MCF 10A (cell line): ENCODE measurements at regions of chr10 and their contacts with region 1.

Region 1: GRCh38 chr10:116287906-116288501 is 15.0 kb upstream of the GFRA1 start:
- DNase-seq: peak; percentile 56
- H3K4me3 Mint-ChIP-seq: no peak overlapping the region
- H3K27ac Mint-ChIP-seq: no peak overlapping the region
- H3K4me1 Mint-ChIP-seq: no peaks in the 10 kb centered on the region
- H3K27me3 Mint-ChIP-seq: peaks cover 34% of the 10 kb centered on the region
- CTCF ChIP-seq: peak; percentile 64

Region 2: GRCh38 chr10:115355162-115355760 is 932.7 kb before region 1 on chr10:
- CTCF ChIA-PET with region 1: interaction called, 4 read pairs
- POLR2A ChIA-PET with region 1: no interaction called
- intact Hi-C with region 1: loop called (anchors 1 kb)
- DNase-seq: peak; percentile 77
- H3K4me3 Mint-ChIP-seq: no peak overlapping the region
- H3K27ac Mint-ChIP-seq: no peak overlapping the region
- H3K4me1 Mint-ChIP-seq: no peaks in the 10 kb centered on the region
- H3K27me3 Mint-ChIP-seq: peaks cover 90% of the 10 kb centered on the region
- CTCF ChIP-seq: peak; percentile 90

Region 3: GRCh38 chr10:115706026-115706781 is 581.8 kb before region 1 on chr10:
- CTCF ChIA-PET with region 1: interaction called, 46 read pairs
- POLR2A ChIA-PET with region 1: no interaction called
- intact Hi-C with region 1: loop called (anchors 1 kb)
- DNase-seq: peak; percentile 50
- H3K4me3 Mint-ChIP-seq: no peak overlapping the region
- H3K27ac Mint-ChIP-seq: no peak overlapping the region
- H3K4me1 Mint-ChIP-seq: peaks cover 9% of the 10 kb centered on the region
- H3K27me3 Mint-ChIP-seq: no peaks in the 10 kb centered on the region
- CTCF ChIP-seq: peak; percentile 56

Region 4: DNA sequence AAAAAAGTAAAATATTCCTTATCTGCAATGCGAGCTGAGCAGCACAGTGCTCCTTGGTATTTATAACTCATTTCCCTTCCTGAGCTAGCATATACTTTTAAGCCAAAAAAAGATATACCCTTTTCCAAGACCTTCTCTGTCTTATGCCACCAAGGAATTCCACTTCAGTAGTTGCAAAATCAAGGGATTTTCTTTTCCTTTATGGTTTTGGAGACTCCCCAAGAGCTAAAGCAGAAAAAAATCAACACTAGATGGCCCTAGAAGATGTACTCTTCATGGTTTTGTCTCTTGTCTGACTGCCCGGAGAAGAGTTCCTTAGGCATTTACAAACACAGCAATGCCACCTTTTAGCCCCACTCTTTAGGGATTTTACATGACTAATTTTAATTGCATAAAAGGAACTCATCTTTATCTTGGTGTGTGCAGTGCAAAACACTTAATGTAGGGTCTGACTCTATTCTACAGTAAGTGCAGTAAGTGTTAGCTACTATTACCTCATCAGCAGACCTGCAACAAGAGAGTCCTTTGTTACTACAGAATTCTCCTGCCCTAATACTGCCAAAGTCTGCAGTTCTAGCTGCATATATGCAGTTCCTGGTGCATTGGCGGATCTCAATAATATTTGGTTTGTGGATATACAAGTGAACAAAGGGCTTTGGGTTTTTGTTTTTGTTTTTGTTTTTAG is 458.3 kb before region 1 on chr10:
- CTCF ChIA-PET with region 1: interaction called, 16 read pairs
- POLR2A ChIA-PET with region 1: interaction called, 3 read pairs
- intact Hi-C with region 1: loop called (anchors 1 kb)
- DNase-seq: peak; percentile 57
- H3K4me3 Mint-ChIP-seq: no peak overlapping the region
- H3K27ac Mint-ChIP-seq: no peak overlapping the region
- H3K4me1 Mint-ChIP-seq: no peaks in the 10 kb centered on the region
- H3K27me3 Mint-ChIP-seq: no peaks in the 10 kb centered on the region
- CTCF ChIP-seq: no peak

Region 5: GRCh38 chr10:116247701-116248100 is 40.3 kb before region 1 on chr10:
- CTCF ChIA-PET with region 1: no interaction called
- POLR2A ChIA-PET with region 1: no interaction called
- intact Hi-C with region 1: no loop called
- DNase-seq: no peak
- H3K4me3 Mint-ChIP-seq: no peak overlapping the region
- H3K27ac Mint-ChIP-seq: no peak overlapping the region
- H3K4me1 Mint-ChIP-seq: no peaks in the 10 kb centered on the region
- H3K27me3 Mint-ChIP-seq: no peaks in the 10 kb centered on the region
- CTCF ChIP-seq: no peak

Region 6: GRCh38 chr10:116298586-116298985 is 10.6 kb after region 1 on chr10:
- CTCF ChIA-PET with region 1: interaction called, 11 read pairs
- POLR2A ChIA-PET with region 1: no interaction called
- intact Hi-C with region 1: no loop called
- DNase-seq: no peak
- H3K4me3 Mint-ChIP-seq: no peak overlapping the region
- H3K27ac Mint-ChIP-seq: no peak overlapping the region
- H3K4me1 Mint-ChIP-seq: no peaks in the 10 kb centered on the region
- H3K27me3 Mint-ChIP-seq: no peaks in the 10 kb centered on the region
- CTCF ChIP-seq: no peak